Calu3 (cell line): ENCODE measurements at regions of chr10 and their contacts with region 1.

Region 1: DNA sequence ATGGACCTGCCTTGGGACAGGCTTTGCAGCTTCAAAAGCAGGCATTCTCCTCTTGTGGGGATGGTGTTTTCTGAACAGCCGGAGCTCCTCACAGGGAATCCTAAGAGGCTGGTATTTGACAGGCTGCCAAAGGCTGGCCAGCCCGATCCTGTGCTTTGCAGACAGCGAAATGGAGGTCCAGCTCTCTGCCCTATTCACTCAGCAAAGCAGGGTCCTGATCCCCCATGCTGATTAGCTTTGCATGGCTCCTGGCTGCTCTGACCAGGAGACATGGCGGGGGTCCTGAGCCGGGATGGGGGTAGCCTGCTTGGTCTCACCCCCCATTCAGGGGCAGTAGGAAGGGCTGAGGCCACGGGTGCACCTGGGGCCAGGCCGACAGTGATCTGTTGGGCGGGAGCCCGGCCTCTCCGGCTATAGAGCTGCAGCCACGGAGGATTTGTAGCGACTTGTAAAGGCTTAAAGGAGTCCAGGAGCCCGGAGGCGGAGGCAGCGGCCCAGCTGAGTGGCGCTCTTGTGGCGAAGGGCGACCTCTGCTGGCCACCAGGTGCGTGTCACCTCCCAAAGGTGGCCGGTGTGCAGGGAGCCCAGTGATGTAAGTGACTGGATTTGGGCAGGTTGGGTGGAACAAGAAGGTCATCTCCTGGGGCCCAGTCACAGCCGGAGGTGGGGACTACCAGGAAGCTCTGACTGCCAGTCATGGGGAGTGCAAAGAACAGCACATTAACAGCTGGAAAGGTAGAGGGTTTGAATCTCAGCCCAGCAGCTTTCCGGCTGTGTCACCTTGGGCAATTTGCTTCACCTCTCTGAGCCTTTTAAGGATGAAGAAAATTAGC is 126.5 kb downstream of the ZMIZ1 start:
- DNase-seq: peak; percentile 91
- H3K4me3 Mint-ChIP-seq: no peak overlapping the region
- H3K27ac Mint-ChIP-seq: peak overlapping the region; percentile 24
- H3K4me1 Mint-ChIP-seq: peaks cover 35% of the 10 kb centered on the region
- H3K27me3 Mint-ChIP-seq: no peaks in the 10 kb centered on the region
- CTCF ChIP-seq: peak; percentile 97

Region 2: DNA sequence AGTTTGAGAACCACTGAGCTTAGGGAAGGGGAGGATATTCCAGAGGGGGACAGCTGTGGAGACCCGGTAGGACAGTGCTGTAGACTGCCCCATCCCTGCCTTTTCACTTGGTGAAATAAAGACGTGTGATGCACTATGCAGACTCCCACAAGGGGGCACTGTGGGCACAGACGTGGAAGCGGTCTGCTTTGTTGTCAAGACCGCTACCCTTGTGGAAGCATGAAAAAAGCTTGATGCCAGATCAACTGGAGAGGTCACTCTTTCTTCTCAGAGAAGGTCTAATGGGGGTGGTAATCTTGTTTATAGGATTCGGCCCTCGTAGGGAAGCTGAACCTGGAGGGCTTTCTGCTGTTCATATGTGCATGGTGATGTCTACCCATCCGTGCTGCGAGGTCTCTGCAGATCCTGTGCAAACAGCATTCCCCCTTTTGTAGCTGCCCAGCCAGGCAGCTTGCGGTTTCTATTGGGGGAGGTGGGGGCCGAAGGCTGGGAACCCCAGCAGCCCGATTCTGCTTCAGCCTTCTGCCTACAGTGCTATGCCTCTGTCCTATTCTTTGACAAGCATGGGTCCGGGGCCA is 1147.9 kb before region 1 on chr10:
- CTCF ChIA-PET with region 1: interaction called, 4 read pairs
- intact Hi-C with region 1: loop called (anchors 1 kb)
- DNase-seq: peak; percentile 93
- H3K4me3 Mint-ChIP-seq: no peak overlapping the region
- H3K27ac Mint-ChIP-seq: no peak overlapping the region
- H3K4me1 Mint-ChIP-seq: no peaks in the 10 kb centered on the region
- H3K27me3 Mint-ChIP-seq: no peaks in the 10 kb centered on the region
- CTCF ChIP-seq: peak; percentile 96

Region 3: GRCh38 chr10:78424719-78425118 is 770.6 kb before region 1 on chr10:
- CTCF ChIA-PET with region 1: no interaction called
- intact Hi-C with region 1: loop called (anchors 2 kb)
- DNase-seq: peak; percentile 41
- H3K4me3 Mint-ChIP-seq: no peak overlapping the region
- H3K27ac Mint-ChIP-seq: no peak overlapping the region
- H3K4me1 Mint-ChIP-seq: no peaks in the 10 kb centered on the region
- H3K27me3 Mint-ChIP-seq: peaks cover 97% of the 10 kb centered on the region
- CTCF ChIP-seq: peak; percentile 35

Region 4: GRCh38 chr10:78664929-78665553 is 530.3 kb before region 1 on chr10:
- CTCF ChIA-PET with region 1: no interaction called
- intact Hi-C with region 1: loop called (anchors 10 kb)
- DNase-seq: peak; percentile 34
- H3K4me3 Mint-ChIP-seq: no peak overlapping the region
- H3K27ac Mint-ChIP-seq: no peak overlapping the region
- H3K4me1 Mint-ChIP-seq: no peaks in the 10 kb centered on the region
- H3K27me3 Mint-ChIP-seq: peaks cover 83% of the 10 kb centered on the region
- CTCF ChIP-seq: peak; percentile 45

Region 5: DNA sequence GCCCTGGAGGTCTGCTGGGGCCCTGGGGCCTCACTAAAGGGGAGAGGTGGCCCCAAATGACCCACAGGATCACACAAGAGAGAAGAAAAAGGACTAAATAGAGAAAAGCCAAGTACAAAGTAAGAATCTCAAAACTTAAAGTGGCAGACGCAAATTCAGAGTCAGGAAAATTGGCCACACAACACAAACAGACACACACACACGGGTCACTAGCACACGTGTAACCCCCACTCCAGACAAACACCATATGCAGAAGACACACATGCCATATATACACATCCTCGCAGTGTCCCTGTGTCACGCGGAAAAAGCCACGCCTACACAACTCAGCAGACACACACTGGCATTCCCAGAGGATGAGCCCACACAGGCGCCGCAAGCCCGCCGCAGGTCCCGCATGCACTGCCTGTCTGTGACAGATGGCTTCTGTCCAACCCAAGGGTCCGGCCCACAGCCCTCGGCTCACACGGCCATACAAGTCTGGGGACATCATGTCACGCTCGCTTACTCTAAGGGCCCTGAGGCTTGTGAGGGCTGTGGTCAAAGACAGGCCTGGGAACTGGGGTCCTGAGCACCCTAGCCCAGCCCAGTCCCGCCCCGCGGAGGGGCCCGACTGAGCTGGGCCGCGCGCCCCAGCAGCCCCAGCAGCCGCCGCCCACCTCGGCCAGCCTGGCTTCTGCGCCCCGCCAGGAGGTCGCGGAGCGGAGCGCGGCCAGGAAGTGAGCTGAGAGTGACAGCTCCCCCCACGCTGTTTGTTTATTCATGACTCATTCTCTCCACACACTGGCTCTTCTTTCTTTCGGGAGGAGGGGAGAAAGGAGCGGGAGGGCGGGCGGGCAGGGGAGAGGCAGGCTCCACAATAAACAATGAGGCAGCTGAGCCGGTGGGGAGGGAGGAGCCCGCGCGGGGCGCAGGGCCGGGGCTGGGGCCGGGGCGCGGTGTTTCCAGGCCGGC is 222.1 kb before region 1 on chr10:
- CTCF ChIA-PET with region 1: no interaction called
- intact Hi-C with region 1: loop called (anchors 5 kb)
- DNase-seq: peak; percentile 88
- H3K4me3 Mint-ChIP-seq: peak overlapping the region; percentile 65
- H3K27ac Mint-ChIP-seq: peak overlapping the region; percentile 93
- H3K4me1 Mint-ChIP-seq: peaks cover 65% of the 10 kb centered on the region
- H3K27me3 Mint-ChIP-seq: no peaks in the 10 kb centered on the region
- CTCF ChIP-seq: no peak